ENCODE measurements at regions of chr2 and their contacts with region 1.

Region 1: DNA sequence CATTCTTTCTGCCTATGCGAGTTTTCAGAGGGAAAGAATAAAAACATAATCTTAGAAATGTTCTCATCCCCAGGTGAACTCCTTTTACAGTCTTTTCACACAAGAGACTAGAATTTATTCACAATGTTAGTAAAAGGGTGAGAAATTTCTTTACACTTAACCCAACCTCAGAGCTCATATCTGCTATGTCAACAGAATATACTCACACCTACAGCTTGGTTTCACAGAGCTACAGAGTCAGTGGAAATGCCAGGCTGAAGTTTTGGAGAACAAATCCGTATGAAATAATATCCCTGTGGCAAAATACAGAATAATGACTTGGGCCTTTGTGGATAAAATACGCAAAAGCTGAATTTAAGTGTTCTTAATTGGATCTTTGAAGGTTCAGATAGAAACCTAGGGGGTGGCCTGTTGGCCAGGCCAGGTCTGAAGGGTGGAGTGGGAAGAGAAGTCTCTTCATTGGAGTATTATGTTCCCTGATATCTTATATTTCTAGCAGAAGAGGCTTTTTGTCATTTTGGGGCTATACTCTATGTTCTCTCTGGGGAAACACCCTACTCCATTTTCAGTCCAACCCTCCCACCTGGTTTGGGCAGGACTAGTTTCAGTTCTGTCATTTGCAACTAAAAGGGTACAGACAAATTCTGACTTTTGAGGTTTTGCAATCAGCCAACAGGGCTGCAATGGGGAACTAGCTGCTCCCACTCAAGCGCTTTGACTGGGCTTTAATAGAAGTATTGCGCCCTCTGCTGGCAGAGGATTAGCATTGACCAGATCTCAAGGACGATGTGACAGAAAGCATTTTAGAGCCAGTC is 25.7 kb downstream of the FBXO48 start:
- DNase-seq: peak; percentile 80 to 82
- H3K4me3 ChIP-seq: no peak overlapping the region
- H3K4me3 Mint-ChIP-seq: no peak overlapping the region
- H3K27ac Mint-ChIP-seq: no peak overlapping the region
- H3K4me1 ChIP-seq: peaks cover 16% of the 10 kb centered on the region
- H3K4me1 Mint-ChIP-seq: peaks cover 11% of the 10 kb centered on the region
- H3K27me3 ChIP-seq: no peaks in the 10 kb centered on the region
- H3K27me3 Mint-ChIP-seq: peaks cover 3% of the 10 kb centered on the region
- CTCF ChIP-seq: peak; percentile 84 to 96

Region 2: GRCh38 chr2:68121873-68122679 is 319.3 kb before region 1 on chr2:
- CTCF ChIA-PET with region 1: interaction called, 4 read pairs
- POLR2A ChIA-PET with region 1: no interaction called
- intact Hi-C with region 1: loop called (anchors 1 kb)
- DNase-seq: peak; percentile 87 to 89
- H3K4me3 ChIP-seq: no peak overlapping the region
- H3K4me3 Mint-ChIP-seq: peak overlapping the region; percentile 34
- H3K27ac Mint-ChIP-seq: no peak overlapping the region
- H3K4me1 ChIP-seq: peaks cover 12% of the 10 kb centered on the region
- H3K4me1 Mint-ChIP-seq: peaks cover 10% of the 10 kb centered on the region
- H3K27me3 ChIP-seq: no peaks in the 10 kb centered on the region
- H3K27me3 Mint-ChIP-seq: no peaks in the 10 kb centered on the region
- CTCF ChIP-seq: peak; percentile 96

Region 3: DNA sequence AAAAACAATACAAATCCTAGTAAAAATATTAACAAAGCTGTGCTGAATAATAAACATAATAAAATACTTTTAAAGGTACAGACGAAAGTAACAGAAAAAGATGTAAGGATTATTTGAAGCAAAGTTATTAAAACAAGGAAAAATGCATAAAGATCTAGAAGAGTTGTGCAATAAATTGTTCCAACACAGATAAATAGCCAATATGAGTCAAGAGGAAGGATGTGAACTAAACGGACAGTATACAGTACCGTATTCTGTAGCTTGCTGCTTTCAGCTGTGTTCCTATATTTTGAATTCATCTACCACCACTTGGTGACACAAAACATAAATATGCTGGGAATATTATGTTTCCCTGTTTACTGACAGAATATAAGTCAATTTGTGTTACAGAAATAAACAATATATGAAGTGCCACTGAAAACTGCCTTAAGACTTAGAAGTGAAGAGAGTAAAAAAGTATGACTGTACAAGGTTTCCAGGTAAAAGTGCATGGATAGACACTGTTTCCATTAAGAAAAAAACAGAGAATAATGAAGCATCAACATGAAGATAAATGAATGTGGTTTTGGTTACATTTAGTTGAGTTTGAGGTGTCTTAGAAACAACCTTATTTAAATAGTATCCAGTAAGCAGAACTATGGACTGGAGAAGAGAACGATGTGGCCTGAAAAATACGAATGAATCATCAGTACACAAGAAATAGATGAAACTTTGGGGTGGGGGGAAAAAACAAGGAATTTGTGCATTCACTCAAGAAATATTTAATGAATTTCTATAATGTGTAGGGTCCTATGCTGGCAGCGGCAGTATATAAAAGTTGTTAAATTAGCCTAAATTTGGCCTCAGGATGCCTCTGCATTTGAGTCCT is 202.2 kb before region 1 on chr2:
- CTCF ChIA-PET with region 1: no interaction called
- POLR2A ChIA-PET with region 1: no interaction called
- intact Hi-C with region 1: no loop called
- DNase-seq: no peak
- H3K4me3 ChIP-seq: no peak overlapping the region
- H3K4me3 Mint-ChIP-seq: no peak overlapping the region
- H3K27ac Mint-ChIP-seq: no peak overlapping the region
- H3K4me1 ChIP-seq: no peaks in the 10 kb centered on the region
- H3K4me1 Mint-ChIP-seq: peaks cover 17% of the 10 kb centered on the region
- H3K27me3 ChIP-seq: no peaks in the 10 kb centered on the region
- H3K27me3 Mint-ChIP-seq: no peaks in the 10 kb centered on the region
- CTCF ChIP-seq: no peak

Region 4: GRCh38 chr2:68290901-68291300 is 150.5 kb before region 1 on chr2:
- CTCF ChIA-PET with region 1: interaction called, 3 read pairs
- POLR2A ChIA-PET with region 1: no interaction called
- intact Hi-C with region 1: loop called (anchors 5 kb)
- DNase-seq: no peak
- H3K4me3 ChIP-seq: no peak overlapping the region
- H3K4me3 Mint-ChIP-seq: no peak overlapping the region
- H3K27ac Mint-ChIP-seq: no peak overlapping the region
- H3K4me1 ChIP-seq: no peaks in the 10 kb centered on the region
- H3K4me1 Mint-ChIP-seq: no peaks in the 10 kb centered on the region
- H3K27me3 ChIP-seq: no peaks in the 10 kb centered on the region
- H3K27me3 Mint-ChIP-seq: peaks cover 15% of the 10 kb centered on the region
- CTCF ChIP-seq: no peak

Region 5: GRCh38 chr2:68362069-68362468 is 79.3 kb before region 1 on chr2:
- CTCF ChIA-PET with region 1: interaction called, 5 read pairs
- POLR2A ChIA-PET with region 1: no interaction called
- intact Hi-C with region 1: loop called (anchors 1 kb)
- DNase-seq: peak; percentile 72 to 80
- H3K4me3 ChIP-seq: no peak overlapping the region
- H3K4me3 Mint-ChIP-seq: no peak overlapping the region
- H3K27ac Mint-ChIP-seq: no peak overlapping the region
- H3K4me1 ChIP-seq: no peaks in the 10 kb centered on the region
- H3K4me1 Mint-ChIP-seq: no peaks in the 10 kb centered on the region
- H3K27me3 ChIP-seq: no peaks in the 10 kb centered on the region
- H3K27me3 Mint-ChIP-seq: no peaks in the 10 kb centered on the region
- CTCF ChIP-seq: peak; percentile 80 to 87